ENCODE measurements at regions of chr6 and their contacts with region 1.

Region 1: GRCh38 chr6:43477235-43478007 is at the start of gene TJAP1:
- DNase-seq: peak; percentile 97

Region 2: GRCh38 chr6:42845327-42845694 is 632.1 kb before region 1 on chr6:
- CTCF ChIA-PET with region 1: no interaction called
- POLR2A ChIA-PET with region 1: no interaction called
- DNase-seq: no peak

Region 3: GRCh38 chr6:43454696-43455530 is 22.5 kb before region 1 on chr6:
- CTCF ChIA-PET with region 1: no interaction called
- POLR2A ChIA-PET with region 1: interaction called, 18 read pairs
- DNase-seq: peak; percentile 82

Measured in HEK293T (cell line).